ENCODE measurements at regions of chr15 and their contacts with region 1.

Region 1: DNA sequence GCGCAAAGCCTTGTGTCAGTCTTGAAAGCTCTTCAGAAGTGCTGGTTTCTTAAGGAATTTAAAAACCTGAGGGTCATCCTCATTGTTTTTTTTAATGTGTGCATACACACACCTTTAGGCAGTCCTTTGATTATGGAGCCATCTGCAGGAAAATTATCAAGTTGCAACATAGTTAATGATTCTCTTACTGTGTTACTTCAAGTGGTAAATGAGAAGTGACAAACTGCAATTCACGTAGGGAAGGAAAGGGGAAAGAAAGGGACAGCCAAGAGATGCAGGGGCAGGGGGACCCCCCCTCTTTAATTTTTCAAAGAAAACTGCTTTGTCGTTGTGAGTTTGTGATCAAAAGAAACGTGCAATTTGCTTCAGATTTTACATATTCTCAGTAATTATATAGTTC is 162.4 kb upstream of the CGNL1 start:
- DNase-seq: peak in 2 of 4 experiments; percentile 9 to 46
- ATAC-seq: peak; percentile 82
- H3K4me3 ChIP-seq: no peak overlapping the region
- H3K27ac ChIP-seq: no peak overlapping the region
- H3K4me1 ChIP-seq: peaks cover 0 to 8% of the 10 kb centered on the region in 2 experiments; a peak in 2 of 5 replicates
- H3K27me3 ChIP-seq: no peaks in the 10 kb centered on the region
- CTCF ChIP-seq: peak; percentile 34 to 72 (median 58); a peak in 5 of 6 replicates
- EP300 ChIP-seq: no peak
- POLR2A ChIP-seq: no peak
- RAD21 ChIP-seq: peak; percentile 70 to 78

Region 2: DNA sequence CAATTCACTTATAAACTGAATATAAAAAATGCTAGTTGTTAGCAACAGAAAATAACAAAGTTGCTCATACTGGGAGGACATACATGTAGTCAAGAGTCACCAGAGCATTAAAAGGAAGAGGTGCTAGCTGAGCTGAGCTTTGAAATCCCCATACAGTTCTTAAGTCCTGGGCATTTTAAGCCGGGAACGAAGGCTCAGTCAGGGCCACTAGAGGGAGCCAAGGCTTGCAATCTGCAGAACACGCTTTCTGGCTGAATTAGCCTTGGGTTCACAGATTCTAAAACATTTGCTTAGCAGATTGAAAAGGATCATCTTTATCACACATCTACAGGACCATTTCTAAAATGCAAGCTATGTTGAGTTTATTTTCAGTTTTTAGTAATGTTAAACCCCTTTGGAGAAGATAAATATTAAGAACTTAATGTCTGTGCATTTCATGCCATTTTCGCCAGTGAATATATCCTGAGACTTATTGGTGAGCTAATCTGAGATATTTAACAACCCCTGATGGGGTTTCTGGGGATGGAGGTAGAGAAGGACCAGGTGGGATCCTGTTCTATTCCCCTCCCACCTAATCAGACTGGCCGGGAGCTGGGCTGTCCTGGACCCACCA is 722.6 kb before region 1 on chr15:
- CTCF ChIA-PET with region 1: no interaction called
- POLR2A ChIA-PET with region 1: no interaction called
- in situ Hi-C with region 1: no loop called
- intact Hi-C with region 1: loop called (anchors 10 kb)
- DNase-seq: peak; percentile 52 to 74 (median 65)
- ATAC-seq: peak; percentile 95
- H3K4me3 ChIP-seq: no peak overlapping the region
- H3K27ac ChIP-seq: no peak overlapping the region
- H3K4me1 ChIP-seq: no peaks in the 10 kb centered on the region; a peak in 1 of 5 replicates
- H3K27me3 ChIP-seq: no peaks in the 10 kb centered on the region
- CTCF ChIP-seq: peak; percentile 81 to 90 (median 89)
- EP300 ChIP-seq: no peak
- POLR2A ChIP-seq: no peak
- RAD21 ChIP-seq: peak; percentile 73 to 87

Region 3: GRCh38 chr15:57017024-57017423 is 196.8 kb before region 1 on chr15:
- CTCF ChIA-PET with region 1: no interaction called
- POLR2A ChIA-PET with region 1: no interaction called
- in situ Hi-C with region 1: no loop called
- intact Hi-C with region 1: loop called (anchors 10 kb)
- DNase-seq: peak in 1 of 4 experiments; percentile 16
- ATAC-seq: peak; percentile 56; the same call in 1 of the 3 replicates
- H3K4me3 ChIP-seq: no peak overlapping the region
- H3K27ac ChIP-seq: no peak overlapping the region
- H3K4me1 ChIP-seq: peaks cover 0 to 3% of the 10 kb centered on the region in 2 experiments; a peak in 2 of 5 replicates
- H3K27me3 ChIP-seq: no peaks in the 10 kb centered on the region
- CTCF ChIP-seq: peak in 1 of 3 experiments; percentile 48; a peak in 2 of 6 replicates
- EP300 ChIP-seq: no peak
- POLR2A ChIP-seq: no peak
- RAD21 ChIP-seq: peak; percentile 28 to 45

Region 4: DNA sequence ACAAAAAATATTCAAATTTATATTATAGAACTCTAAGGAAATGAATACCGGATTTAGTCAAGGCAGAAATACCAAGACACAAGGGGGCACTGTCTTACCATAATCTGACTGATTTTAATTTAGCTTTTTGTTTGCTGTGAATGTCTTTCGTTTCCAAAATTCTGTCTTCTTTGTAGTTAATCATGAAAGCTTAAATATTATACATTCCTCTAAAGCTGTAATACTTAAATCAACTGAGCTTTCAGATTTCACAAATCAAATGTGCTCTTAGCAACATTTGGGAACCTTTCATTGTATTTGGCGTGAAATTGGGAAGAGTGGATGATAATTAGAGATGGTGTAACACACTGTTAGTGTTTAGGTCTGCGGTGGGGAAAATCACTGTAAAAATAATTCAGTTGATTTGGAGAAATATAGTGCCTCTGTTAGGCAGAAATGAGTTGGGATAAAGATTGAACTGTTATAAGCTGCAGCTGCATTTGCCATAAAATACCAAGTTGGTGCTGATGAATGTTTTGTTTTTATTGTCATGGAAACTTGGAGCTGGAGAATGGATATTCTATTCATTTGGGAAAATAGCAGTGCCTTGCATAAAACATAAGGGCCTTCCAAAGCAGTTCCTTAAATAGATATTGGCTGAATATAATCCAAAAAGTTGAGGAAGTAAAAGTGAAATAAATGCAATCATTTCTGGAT is 67.2 kb before region 1 on chr15:
- CTCF ChIA-PET with region 1: interaction called, 9 read pairs
- POLR2A ChIA-PET with region 1: no interaction called
- in situ Hi-C with region 1: no loop called
- intact Hi-C with region 1: loop called (anchors 1 kb)
- DNase-seq: peak; percentile 10 to 53 (median 16)
- ATAC-seq: 0 out of 3 replicates have a peak, but pooled peaks have one; percentile 45
- H3K4me3 ChIP-seq: no peak overlapping the region
- H3K27ac ChIP-seq: no peak overlapping the region
- H3K4me1 ChIP-seq: peaks cover 4 to 16% of the 10 kb centered on the region in 2 experiments; a peak in 4 of 5 replicates
- H3K27me3 ChIP-seq: no peaks in the 10 kb centered on the region
- CTCF ChIP-seq: peak in 2 of 3 experiments; percentile 46 to 78; a peak in 4 of 6 replicates
- EP300 ChIP-seq: no peak
- POLR2A ChIP-seq: no peak
- RAD21 ChIP-seq: peak; percentile 48 to 74